ENCODE measurements at regions of chr2 and their contacts with region 1.

Region 1: GRCh38 chr2:42587526-42588117 is 19.2 kb downstream of the MTA3 start:
- DNase-seq: no peak
- H3K4me3 ChIP-seq: no peak overlapping the region
- H3K27ac ChIP-seq: no peak overlapping the region
- H3K4me1 ChIP-seq: peaks cover 6% of the 10 kb centered on the region
- CTCF ChIP-seq: no peak

Region 2: GRCh38 chr2:42598656-42599055 is 11.0 kb after region 1 on chr2:
- CTCF ChIA-PET with region 1: no interaction called
- POLR2A ChIA-PET with region 1: interaction called, 10 read pairs
- intact Hi-C with region 1: no loop called
- DNase-seq: peak; percentile 68
- H3K4me3 ChIP-seq: peak overlapping the region; percentile 48
- H3K27ac ChIP-seq: peak overlapping the region; percentile 82
- H3K4me1 ChIP-seq: peaks cover 43% of the 10 kb centered on the region
- CTCF ChIP-seq: peak; percentile 73

Measured in OCI-LY7 (cell line).